ENCODE measurements at regions of chr7 and their contacts with region 1.

Region 1: DNA sequence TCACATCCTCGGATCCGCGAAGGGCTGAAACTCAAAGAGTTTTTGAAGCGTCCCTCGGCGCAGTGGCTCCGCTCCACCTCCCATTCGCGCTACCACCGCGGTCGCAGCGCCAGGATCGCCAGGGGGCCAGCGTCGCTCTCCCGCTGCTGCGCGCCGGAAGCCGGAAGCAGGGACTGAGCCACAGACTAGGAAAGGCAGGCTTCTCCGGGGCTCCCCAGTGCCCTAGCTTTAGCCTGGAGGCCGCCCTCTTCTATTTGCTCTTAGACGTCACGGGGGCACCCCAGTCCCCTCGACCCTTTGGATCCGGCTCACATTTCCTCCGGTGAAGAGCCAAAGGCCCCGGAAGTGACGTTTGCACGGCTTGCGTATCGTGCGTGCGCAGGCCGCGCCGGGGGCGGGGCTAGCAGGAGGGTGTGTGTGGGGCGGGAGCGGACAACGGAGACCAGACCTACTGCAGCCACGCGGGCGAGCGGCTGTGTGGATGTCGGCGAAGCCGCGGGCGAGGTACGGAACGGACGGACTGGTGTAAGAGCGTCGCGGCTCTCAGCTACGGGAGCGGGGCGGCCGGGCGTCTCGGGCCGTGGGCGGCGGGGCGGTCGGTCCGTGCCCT is 25.5 kb downstream of the KCTD7 start:
- DNase-seq: peak; percentile 99
- ATAC-seq: peak; percentile 99
- H3K4me3 ChIP-seq: peak overlapping the region; percentile 47 to 74
- H3K27ac ChIP-seq: peak overlapping the region; percentile 89 to 95
- H3K4me1 ChIP-seq: no peaks in the 10 kb centered on the region
- H3K27me3 ChIP-seq: no peaks in the 10 kb centered on the region

Region 2: DNA sequence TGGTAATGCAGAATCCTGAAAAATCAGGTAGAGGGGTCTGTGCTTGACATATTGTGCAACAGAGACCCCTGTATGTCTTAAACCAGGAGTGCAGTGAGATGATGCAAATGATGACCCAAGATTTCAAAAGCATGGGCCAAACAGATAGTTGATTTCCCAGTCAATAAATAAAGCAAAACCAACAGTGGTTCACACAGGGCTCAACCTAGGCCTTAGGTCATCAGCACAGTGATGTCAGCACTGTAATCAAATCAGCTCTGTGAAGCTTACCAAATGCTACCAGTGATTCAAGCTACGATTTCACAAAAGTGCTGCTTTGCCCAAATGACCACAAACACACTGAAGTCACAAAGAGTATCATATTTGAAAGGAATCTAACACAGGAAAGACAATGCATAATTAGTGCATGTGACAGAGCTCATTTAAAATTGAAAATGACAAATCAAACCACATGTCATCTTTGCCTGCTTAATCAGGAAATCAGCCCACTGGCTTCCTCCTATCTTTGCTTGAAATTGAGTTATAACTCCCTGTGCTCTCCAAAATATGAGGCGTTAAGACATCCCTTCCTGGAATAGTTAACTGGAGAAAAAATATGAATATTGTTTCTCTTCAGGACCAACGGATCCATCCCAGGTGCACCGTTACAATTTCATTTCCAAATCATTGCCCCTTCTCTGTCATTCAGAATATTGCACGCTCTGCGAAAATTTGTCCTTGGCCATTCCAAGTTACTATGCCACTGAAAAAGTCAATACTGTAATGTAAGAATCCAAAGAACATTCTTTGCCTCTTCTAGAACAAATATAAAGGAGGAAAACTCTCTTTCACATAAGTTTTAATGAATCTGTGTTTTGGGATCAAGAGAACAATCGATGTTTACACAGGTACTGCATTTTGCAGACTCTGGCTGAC is 620.5 kb before region 1 on chr7:
- intact Hi-C with region 1: loop called in 1 of 2 experiments (anchors 10 kb)
- DNase-seq: no peak
- ATAC-seq: no peak
- H3K4me3 ChIP-seq: no peak overlapping the region
- H3K27ac ChIP-seq: no peak overlapping the region
- H3K4me1 ChIP-seq: no peaks in the 10 kb centered on the region
- H3K27me3 ChIP-seq: no peaks in the 10 kb centered on the region

Region 3: GRCh38 chr7:66507764-66508296 is 146.4 kb before region 1 on chr7:
- intact Hi-C with region 1: no loop called
- DNase-seq: peak in 1 of 2 donors; percentile 21
- ATAC-seq: no peak
- H3K4me3 ChIP-seq: no peak overlapping the region
- H3K27ac ChIP-seq: no peak overlapping the region
- H3K4me1 ChIP-seq: no peaks in the 10 kb centered on the region
- H3K27me3 ChIP-seq: no peaks in the 10 kb centered on the region

Region 4: GRCh38 chr7:66557608-66558143 is 96.6 kb before region 1 on chr7:
- intact Hi-C with region 1: loop called in 1 of 2 experiments (anchors 10 kb)
- DNase-seq: peak; percentile 79 to 93
- ATAC-seq: peak; percentile 83
- H3K4me3 ChIP-seq: no peak overlapping the region
- H3K27ac ChIP-seq: no peak overlapping the region
- H3K4me1 ChIP-seq: no peaks in the 10 kb centered on the region
- H3K27me3 ChIP-seq: no peaks in the 10 kb centered on the region

Region 5: DNA sequence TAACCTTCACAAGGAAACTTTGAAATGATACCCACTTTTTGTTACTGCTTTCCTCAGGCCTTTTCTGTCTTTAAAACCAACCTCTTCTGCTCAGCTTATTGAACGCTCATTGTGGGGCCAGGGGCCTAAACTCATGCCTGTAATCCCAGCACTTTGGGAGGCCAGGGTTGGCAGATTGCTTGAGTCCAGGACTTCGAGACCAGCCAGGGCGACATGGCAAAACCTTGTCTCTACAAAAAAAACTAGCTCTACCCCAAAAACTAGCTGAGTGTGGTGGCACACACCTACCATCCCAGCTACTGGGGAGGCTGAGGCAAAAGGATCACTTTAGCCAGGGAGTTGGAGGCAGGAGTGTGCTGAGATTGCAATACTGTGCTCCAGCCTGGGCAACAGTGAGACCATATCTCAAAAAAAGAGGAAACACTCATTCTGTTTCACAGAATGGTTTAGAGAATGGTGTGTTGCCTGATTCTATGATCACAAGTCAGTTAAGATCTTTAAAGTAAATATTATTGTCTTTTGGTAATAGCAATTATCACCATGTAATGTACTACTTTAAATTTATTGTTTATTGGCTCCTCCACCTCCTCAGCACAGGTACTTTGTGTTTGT is 25.5 kb after region 1 on chr7:
- intact Hi-C with region 1: no loop called
- DNase-seq: no peak
- ATAC-seq: no peak
- H3K4me3 ChIP-seq: no peak overlapping the region
- H3K27ac ChIP-seq: no peak overlapping the region
- H3K4me1 ChIP-seq: no peaks in the 10 kb centered on the region
- H3K27me3 ChIP-seq: no peaks in the 10 kb centered on the region